Activated CD4-positive, alpha-beta memory T cell treated with anti-CD3 and anti-CD28 coated beads, Interleukin-2, amount 10 ng/mL, durations not matched to agents 7 days and 5 days (primary cell): ENCODE measurements at regions of chr3 and their contacts with region 1.

Region 1: GRCh38 chr3:31227131-31227562 is 305.6 kb upstream of the STT3B start:
- DNase-seq: no peak
- H3K4me3 Mint-ChIP-seq: no peak overlapping the region
- H3K27ac Mint-ChIP-seq: peak overlapping the region; percentile 91
- H3K4me1 Mint-ChIP-seq: peaks cover 87% of the 10 kb centered on the region
- H3K27me3 Mint-ChIP-seq: no peaks in the 10 kb centered on the region

Region 2: DNA sequence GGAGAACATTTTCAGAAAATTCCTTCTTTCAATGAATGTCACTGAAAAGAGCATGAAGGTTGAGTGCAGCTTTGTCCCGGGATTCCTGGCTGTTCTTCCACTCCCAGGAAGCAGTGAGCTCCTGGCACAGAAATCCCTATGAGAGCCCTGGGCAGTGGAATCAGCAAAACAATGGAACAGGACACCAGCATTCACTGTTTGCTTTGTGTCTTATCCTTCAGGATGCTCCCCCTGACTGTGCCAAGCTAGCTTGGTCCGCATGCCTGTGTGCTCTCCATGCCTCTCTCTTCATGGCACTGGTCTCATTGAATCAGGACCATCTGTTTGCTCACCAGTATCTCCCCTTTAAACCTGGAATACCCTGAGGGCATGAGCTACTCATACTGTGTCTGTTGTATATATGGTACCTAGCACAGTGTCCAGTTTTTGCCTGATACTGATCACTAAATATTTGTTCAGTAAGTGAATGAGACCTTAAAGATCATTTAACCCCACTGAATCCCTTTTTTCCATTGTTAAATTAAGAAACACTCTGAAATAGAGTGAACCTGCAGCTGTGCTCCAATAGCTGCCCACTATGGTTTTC is 230.6 kb before region 1 on chr3:
- CTCF ChIA-PET with region 1: no interaction called
- POLR2A ChIA-PET with region 1: no interaction called
- DNase-seq: no peak
- H3K4me3 Mint-ChIP-seq: no peak overlapping the region
- H3K27ac Mint-ChIP-seq: no peak overlapping the region
- H3K4me1 Mint-ChIP-seq: no peaks in the 10 kb centered on the region
- H3K27me3 Mint-ChIP-seq: no peaks in the 10 kb centered on the region

Region 3: DNA sequence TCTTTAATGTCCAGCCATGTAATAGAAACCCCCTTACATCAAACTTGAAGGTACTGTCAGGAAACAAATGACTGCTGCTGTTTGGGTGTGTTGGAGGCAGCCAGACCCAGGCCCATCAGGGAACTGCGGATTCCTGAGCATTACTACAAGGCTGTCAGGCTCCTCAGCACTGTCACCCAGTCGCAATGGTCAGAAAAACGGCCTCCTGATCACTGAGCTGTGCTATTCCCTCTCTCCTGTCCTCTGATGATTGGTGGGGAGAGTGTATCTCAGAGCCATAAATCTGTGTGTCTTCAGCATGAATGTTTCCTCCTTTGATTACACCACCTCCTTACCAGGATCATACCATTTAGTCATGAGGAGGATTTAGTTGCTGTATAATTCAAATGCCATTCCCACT is 197.4 kb before region 1 on chr3:
- CTCF ChIA-PET with region 1: no interaction called
- POLR2A ChIA-PET with region 1: no interaction called
- DNase-seq: no peak
- H3K4me3 Mint-ChIP-seq: no peak overlapping the region
- H3K27ac Mint-ChIP-seq: no peak overlapping the region
- H3K4me1 Mint-ChIP-seq: peaks cover 1% of the 10 kb centered on the region
- H3K27me3 Mint-ChIP-seq: peaks cover 1% of the 10 kb centered on the region

Region 4: DNA sequence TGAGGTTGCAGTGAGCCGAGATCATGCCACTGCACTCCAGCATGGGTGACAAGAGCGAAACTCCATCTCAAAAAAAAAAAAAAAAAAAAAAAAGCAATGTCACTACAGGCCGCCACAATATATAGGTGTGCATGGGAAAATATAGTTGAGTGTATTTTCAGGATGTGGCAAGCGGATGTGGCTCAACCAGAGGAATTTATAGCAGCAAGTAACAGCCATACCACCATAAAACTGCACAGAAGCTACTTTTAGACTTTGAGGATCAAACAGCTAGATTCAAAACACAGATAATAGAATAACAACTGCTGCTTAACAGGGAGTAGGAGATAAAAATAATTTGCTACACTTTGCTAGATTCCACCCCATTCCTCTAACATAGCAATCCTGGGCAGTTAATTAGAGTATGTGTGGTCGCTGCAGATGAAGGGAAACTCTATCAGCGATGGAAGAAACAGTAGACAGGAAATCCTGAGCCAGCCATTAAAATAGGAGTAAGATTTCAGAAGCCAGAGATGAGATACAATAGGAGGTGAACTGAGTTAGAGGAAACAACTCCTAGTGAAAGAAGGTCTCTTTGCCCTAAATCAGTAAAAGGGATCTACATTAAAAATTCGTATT is 13.2 kb before region 1 on chr3:
- CTCF ChIA-PET with region 1: interaction called, 7 read pairs
- POLR2A ChIA-PET with region 1: interaction called, 61 read pairs
- DNase-seq: peak; percentile 78
- H3K4me3 Mint-ChIP-seq: peak overlapping the region; percentile 49
- H3K27ac Mint-ChIP-seq: peak overlapping the region; percentile 86
- H3K4me1 Mint-ChIP-seq: peaks cover 83% of the 10 kb centered on the region
- H3K27me3 Mint-ChIP-seq: no peaks in the 10 kb centered on the region

Region 5: DNA sequence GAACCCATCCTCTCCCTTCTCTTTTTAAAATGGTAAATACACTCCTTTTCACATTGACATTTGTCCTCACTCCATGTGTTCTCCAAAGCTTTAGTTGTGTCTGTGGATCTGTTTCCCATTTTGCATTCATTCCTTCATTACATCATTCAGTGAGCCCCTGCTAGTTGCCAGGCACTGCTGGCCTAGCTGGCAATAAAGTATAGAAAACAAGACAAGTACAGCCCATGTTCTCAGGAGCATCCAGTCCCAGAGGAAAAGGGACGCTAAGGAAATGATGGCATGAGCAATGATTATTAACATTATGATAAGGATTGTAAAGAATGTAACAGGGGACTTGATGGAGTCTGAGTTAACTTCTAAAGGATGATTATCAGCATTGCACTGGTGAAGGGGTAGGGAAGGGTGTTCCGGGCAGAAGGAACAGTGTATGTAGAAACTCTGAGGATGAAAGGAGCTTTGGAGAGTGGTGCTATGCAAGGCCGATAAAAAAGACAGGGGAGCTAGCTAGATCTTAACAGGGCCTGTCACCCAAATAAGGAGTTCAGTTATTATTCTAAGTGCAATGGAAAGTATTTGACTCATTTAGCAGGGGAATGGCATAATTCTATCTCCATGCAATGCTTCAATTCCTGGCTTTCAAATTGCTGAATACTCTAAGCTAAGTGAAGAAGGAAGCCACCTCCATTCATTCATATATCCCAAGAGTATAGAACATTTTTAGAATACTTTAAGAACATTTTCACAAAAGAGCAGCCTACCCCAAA is 47.3 kb after region 1 on chr3:
- CTCF ChIA-PET with region 1: no interaction called
- POLR2A ChIA-PET with region 1: no interaction called
- DNase-seq: no peak
- H3K4me3 Mint-ChIP-seq: no peak overlapping the region
- H3K27ac Mint-ChIP-seq: no peak overlapping the region
- H3K4me1 Mint-ChIP-seq: peaks cover 10% of the 10 kb centered on the region
- H3K27me3 Mint-ChIP-seq: no peaks in the 10 kb centered on the region